Heart left ventricle (tissue), 16 donors: ENCODE measurements at regions of chr11 and their contacts with region 1.

Region 1: DNA sequence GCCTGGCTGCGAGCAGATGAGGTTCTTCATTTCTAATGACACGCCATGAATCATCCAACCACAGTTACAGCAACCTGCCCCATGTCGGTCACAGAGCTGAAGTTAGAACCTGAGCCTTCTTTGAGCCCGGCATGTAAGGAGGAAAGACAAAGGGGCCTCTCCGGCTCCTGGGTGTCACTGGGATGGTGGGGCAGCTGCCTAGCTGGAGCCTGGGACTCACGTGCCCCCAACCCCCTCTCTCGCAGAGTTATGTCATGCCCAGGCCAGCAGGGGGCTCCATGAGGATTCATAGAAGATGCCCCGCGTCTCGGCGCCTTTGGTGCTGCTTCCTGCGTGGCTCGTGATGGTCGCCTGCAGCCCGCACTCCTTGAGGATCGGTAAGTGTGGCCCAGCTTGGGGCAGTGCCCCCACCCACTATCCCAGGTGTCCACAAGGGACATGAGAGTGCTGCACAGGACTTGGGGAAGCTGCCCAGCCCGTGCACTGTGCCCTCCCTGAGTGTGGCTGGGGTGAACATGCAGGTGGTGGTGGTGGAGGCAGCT is 148.5 kb downstream of the GRIK4 start:
- DNase-seq: no peak
- ATAC-seq: peak in 1 of 4 donors; percentile 31
- H3K4me3 ChIP-seq: no peak overlapping the region
- H3K27ac ChIP-seq: no peak overlapping the region
- H3K4me1 ChIP-seq: no peaks in the 10 kb centered on the region
- H3K27me3 ChIP-seq: peaks cover 0 to 32% (median 4%) of the 10 kb centered on the region in 9 donors
- CTCF ChIP-seq: peak in 11 of 12 donors; percentile 17 to 42 (median 33)
- POLR2A ChIP-seq: no peak

Region 2: GRCh38 chr11:120792306-120792705 is 132.2 kb after region 1 on chr11:
- intact Hi-C with region 1: loop called in 1 of 10 experiments (anchors 10 kb)
- DNase-seq: no peak
- ATAC-seq: no peak
- H3K4me3 ChIP-seq: no peak overlapping the region
- H3K27ac ChIP-seq: no peak overlapping the region
- H3K4me1 ChIP-seq: no peaks in the 10 kb centered on the region
- H3K27me3 ChIP-seq: peaks cover 0 to 58% (median 16%) of the 10 kb centered on the region in 9 donors
- CTCF ChIP-seq: no peak
- POLR2A ChIP-seq: no peak